ENCODE measurements at regions of chr21 and their contacts with region 1.

Region 1: GRCh38 chr21:15064576-15065391 is at the start of gene NRIP1:
- DNase-seq: peak; percentile 94 to 95 (median 95)
- ATAC-seq: peak; percentile 89 to 97 (median 94)
- H3K4me3 ChIP-seq: peak within 1 kb of the TSS; percentile 76 to 92 (median 87)
- H3K27ac ChIP-seq: peak within 1 kb of the TSS; percentile 88 to 98 (median 96)
- H3K4me1 ChIP-seq: peaks cover 0 to 46% (median 32%) of the 10 kb centered on the region in 12 donors
- H3K27me3 ChIP-seq: no peaks in the 10 kb centered on the region
- CTCF ChIP-seq: no peak
- POLR2A ChIP-seq: peak; percentile 22 to 68
- total RNA-seq, gene NRIP1: 11.0 to 32.0 (median 17.8) TPM

Region 2: GRCh38 chr21:14864211-14865021 is 200.4 kb before region 1 on chr21:
- intact Hi-C with region 1: loop called in 9 of 10 experiments (anchors 5 to 10 kb)
- DNase-seq: peak; percentile 57 to 78 (median 72)
- ATAC-seq: peak; percentile 84 to 95 (median 94)
- H3K4me3 ChIP-seq: no peak overlapping the region
- H3K27ac ChIP-seq: peak overlapping the region in 2 of 12 donors; percentile 17 to 30
- H3K4me1 ChIP-seq: peaks cover 0 to 52% (median 4%) of the 10 kb centered on the region in 12 donors
- H3K27me3 ChIP-seq: no peaks in the 10 kb centered on the region
- CTCF ChIP-seq: peak; percentile 51 to 72 (median 59)
- POLR2A ChIP-seq: no peak

Region 3: GRCh38 chr21:15001857-15002606 is 62.8 kb before region 1 on chr21:
- intact Hi-C with region 1: loop called in 3 of 10 experiments (anchors 5 kb)
- DNase-seq: no peak
- ATAC-seq: no peak
- H3K4me3 ChIP-seq: no peak overlapping the region
- H3K27ac ChIP-seq: no peak overlapping the region
- H3K4me1 ChIP-seq: peaks cover 0 to 55% (median 29%) of the 10 kb centered on the region in 12 donors
- H3K27me3 ChIP-seq: no peaks in the 10 kb centered on the region
- CTCF ChIP-seq: no peak
- POLR2A ChIP-seq: no peak

Region 4: DNA sequence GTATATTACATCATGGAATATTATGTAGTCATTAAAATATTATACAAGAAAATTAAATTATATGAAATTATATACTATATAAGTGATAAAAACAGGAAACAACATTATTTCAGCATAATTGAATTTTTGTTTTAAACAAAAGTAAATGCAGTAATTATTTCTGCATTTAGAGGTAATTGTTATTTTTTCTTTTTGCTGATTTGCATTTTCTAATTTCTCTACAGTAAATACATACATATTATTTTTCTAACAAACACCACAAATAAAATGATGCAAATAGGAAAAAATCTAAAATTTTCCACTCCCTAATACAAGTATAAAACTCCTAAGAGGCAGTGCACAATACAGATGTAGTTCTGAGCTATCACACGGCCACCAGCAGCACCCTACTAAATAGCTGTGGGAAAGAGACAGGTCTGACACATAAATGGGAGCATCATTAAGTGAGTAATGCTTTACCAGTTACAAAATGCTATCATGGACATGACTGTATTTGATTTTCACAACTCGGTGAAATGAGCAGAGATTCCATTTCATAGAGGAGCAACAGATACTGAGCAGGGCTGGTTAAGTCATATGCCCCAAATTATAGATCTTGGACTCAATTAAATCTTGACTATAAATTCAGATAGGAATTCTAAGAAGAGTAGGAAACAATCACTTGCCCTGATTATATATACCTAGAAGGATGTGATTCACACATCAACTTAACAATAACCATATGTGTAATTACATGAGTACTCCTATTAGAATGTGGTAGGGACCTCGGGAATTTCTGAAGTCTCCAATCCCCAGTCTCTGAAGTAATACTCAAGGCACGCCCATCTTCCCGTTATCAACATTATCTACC is 48.9 kb before region 1 on chr21:
- intact Hi-C with region 1: no loop called
- DNase-seq: no peak
- ATAC-seq: no peak
- H3K4me3 ChIP-seq: no peak overlapping the region
- H3K27ac ChIP-seq: no peak overlapping the region
- H3K4me1 ChIP-seq: peaks cover 0 to 9% (median 1%) of the 10 kb centered on the region in 12 donors
- H3K27me3 ChIP-seq: no peaks in the 10 kb centered on the region
- CTCF ChIP-seq: no peak
- POLR2A ChIP-seq: no peak

Region 5: GRCh38 chr21:15221799-15222386 is 157.1 kb after region 1 on chr21:
- intact Hi-C with region 1: loop called in 3 of 10 experiments (anchors 5 to 10 kb)
- DNase-seq: peak in 4 of 5 donors; percentile 41 to 76 (median 69)
- ATAC-seq: peak; percentile 90 to 100 (median 99)
- H3K4me3 ChIP-seq: no peak overlapping the region
- H3K27ac ChIP-seq: peak overlapping the region in 6 of 12 donors; percentile 3 to 54 (median 35)
- H3K4me1 ChIP-seq: peaks cover 0 to 36% (median 12%) of the 10 kb centered on the region in 12 donors
- H3K27me3 ChIP-seq: no peaks in the 10 kb centered on the region
- CTCF ChIP-seq: no peak
- POLR2A ChIP-seq: no peak

Region 6: DNA sequence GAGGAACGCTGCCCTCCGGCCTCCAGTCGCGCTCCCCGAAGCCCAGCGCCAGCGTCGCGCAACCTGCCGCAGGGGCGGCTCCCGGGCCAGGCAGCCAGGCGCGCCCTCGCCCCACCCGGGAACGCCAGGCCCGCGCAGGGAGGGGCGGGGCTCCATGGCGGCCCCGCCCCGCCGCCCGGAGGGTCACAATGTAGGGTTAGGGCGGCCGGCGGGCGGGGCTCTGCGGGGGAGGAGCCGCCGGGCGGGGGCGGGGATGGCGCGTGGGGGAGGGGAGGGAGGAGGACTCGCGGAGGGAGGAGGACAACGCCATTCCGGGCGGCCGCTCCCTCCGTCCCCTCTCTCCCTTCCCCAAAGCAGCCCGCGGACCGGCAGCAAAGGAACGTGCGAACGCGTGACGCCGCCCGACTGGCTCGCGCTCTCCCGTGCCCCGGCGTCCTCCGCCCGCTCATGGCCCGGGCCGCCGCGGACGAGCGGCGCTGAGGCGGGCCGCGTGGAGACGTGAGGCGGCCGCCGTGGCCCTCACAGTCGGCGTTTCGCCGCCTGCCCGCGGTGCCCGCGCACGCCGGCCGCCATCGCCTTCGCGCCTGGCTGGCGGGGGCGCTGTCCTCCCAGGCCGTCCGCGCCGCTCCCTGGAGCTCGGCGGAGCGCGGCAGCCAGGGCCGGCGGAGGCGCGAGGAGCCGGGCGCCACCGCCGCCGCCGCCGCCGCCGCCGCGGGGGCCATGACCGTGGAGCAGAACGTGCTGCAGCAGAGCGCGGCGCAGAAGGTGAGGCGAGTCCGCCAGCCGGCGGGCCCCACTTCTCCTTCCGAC is 665.1 kb after region 1 on chr21 and contains the start of gene USP25:
- intact Hi-C with region 1: loop called in 1 of 10 experiments (anchors 10 kb)
- DNase-seq: peak; percentile 92 to 97 (median 94)
- ATAC-seq: peak; percentile 97 to 99 (median 98)
- H3K4me3 ChIP-seq: peak within 1 kb of the TSS; percentile 64 to 95 (median 88)
- H3K27ac ChIP-seq: peak within 1 kb of the TSS; percentile 90 to 98 (median 93)
- H3K4me1 ChIP-seq: peaks cover 0 to 38% (median 18%) of the 10 kb centered on the region in 12 donors
- H3K27me3 ChIP-seq: no peaks in the 10 kb centered on the region
- CTCF ChIP-seq: peak in 4 of 12 donors; percentile 16 to 31 (median 24)
- POLR2A ChIP-seq: peak in 1 of 2 donors; percentile 87
- total RNA-seq, gene USP25: 33.8 to 55.3 (median 45.7) TPM

Measured in heart left ventricle (tissue), 16 donors.